Right ventricle myocardium inferior (tissue), 1 donor: ENCODE measurements at regions of chr12 and their contacts with region 1.

Region 1: GRCh38 chr12:84507956-84508850 is 404.4 kb downstream of the SLC6A15 start:
- DNase-seq: peak; percentile 60
- ATAC-seq: peak; percentile 77

Region 2: DNA sequence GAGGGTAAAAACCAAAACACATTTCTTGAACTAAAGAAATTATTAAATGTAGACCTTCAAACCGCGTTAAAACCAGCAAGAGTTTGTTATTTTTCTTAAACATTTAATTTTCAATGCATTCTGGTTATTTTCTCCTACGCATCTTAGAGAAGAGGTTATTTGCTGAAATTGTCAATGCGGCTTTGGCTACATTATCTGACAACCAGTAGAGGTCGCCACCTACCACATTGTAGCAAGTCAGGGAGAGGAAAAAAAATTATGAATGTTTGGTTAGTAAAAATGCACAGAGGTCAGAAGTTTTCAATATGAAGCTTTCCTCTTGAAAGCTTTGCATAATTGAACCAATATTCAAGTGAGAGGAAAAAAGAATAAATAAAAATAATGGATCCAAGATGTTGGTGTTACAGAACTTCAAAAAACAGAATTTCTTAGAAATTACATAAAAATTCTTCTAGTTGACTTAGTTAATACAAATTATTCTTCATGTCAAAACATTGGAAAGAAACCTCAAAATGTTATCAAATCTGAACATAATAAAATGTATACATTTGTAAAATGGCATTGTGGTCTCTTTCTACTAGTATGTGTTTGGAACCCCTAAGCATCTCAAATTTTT is 1980.9 kb before region 1 on chr12:
- intact Hi-C with region 1: loop called (anchors 5 kb)
- DNase-seq: no peak
- ATAC-seq: no peak